ENCODE measurements at regions of chr3 and their contacts with region 1.

Region 1: GRCh38 chr3:196179380-196180308 is 31.6 kb downstream of the ZDHHC19 start:
- DNase-seq: peak; percentile 91
- H3K4me3 Mint-ChIP-seq: peak overlapping the region; percentile 38
- H3K27ac Mint-ChIP-seq: peak overlapping the region; percentile 100
- H3K4me1 Mint-ChIP-seq: peaks cover 62% of the 10 kb centered on the region
- H3K27me3 Mint-ChIP-seq: no peaks in the 10 kb centered on the region

Region 2: GRCh38 chr3:196081791-196082618 is 97.6 kb before region 1 on chr3 and contains the start of gene TFRC:
- CTCF ChIA-PET with region 1: interaction called, 12 read pairs
- POLR2A ChIA-PET with region 1: interaction called, 237 read pairs
- DNase-seq: peak; percentile 97
- H3K4me3 Mint-ChIP-seq: peak within 1 kb of the TSS; percentile 97
- H3K27ac Mint-ChIP-seq: peak within 1 kb of the TSS; percentile 90
- H3K4me1 Mint-ChIP-seq: peaks cover 43% of the 10 kb centered on the region
- H3K27me3 Mint-ChIP-seq: no peaks in the 10 kb centered on the region
- total RNA-seq, gene TFRC: 326 to 330 TPM

Region 3: GRCh38 chr3:196127295-196128040 is 52.2 kb before region 1 on chr3:
- CTCF ChIA-PET with region 1: interaction called, 9 read pairs
- POLR2A ChIA-PET with region 1: interaction called, 36 read pairs
- DNase-seq: peak; percentile 65
- H3K4me3 Mint-ChIP-seq: peak overlapping the region; percentile 1
- H3K27ac Mint-ChIP-seq: peak overlapping the region; percentile 91
- H3K4me1 Mint-ChIP-seq: peaks cover 33% of the 10 kb centered on the region
- H3K27me3 Mint-ChIP-seq: peaks cover 2% of the 10 kb centered on the region

Region 4: DNA sequence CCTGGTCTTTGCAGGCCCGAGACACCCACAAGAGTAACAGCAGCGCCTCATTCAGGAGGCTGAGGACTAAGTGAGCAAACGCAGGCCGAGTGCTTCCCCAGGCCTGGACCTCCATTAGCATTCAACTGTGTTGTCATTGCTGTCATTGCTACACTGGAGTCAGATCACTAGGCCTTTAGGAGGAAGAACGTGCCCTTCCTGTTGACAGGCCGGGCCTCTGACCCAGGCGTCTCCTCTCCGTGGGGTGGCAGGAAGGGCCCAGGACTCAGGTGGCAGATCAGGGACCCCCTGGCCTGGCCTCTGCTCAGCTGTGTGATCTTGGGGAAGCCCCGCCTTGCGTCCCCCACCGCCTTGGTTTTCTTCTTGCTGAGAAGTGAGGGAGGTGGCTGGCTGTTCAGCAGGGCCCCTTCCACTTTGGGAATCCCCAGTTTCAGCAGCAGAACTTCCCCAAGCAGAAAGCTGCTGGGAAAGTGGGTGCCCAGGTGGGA is 12.4 kb after region 1 on chr3:
- CTCF ChIA-PET with region 1: interaction called, 10 read pairs
- POLR2A ChIA-PET with region 1: interaction called, 71 read pairs
- DNase-seq: peak; percentile 58
- H3K4me3 Mint-ChIP-seq: peak overlapping the region; percentile 34
- H3K27ac Mint-ChIP-seq: peak overlapping the region; percentile 95
- H3K4me1 Mint-ChIP-seq: peaks cover 58% of the 10 kb centered on the region
- H3K27me3 Mint-ChIP-seq: no peaks in the 10 kb centered on the region

Measured in activated CD4-positive, alpha-beta memory T cell treated with anti-CD3 and anti-CD28 coated beads, Interleukin-2, amount 10 ng/mL, durations not matched to agents 7 days and 5 days (primary cell).